ENCODE measurements at regions of chr6 and their contacts with region 1.

Region 1: DNA sequence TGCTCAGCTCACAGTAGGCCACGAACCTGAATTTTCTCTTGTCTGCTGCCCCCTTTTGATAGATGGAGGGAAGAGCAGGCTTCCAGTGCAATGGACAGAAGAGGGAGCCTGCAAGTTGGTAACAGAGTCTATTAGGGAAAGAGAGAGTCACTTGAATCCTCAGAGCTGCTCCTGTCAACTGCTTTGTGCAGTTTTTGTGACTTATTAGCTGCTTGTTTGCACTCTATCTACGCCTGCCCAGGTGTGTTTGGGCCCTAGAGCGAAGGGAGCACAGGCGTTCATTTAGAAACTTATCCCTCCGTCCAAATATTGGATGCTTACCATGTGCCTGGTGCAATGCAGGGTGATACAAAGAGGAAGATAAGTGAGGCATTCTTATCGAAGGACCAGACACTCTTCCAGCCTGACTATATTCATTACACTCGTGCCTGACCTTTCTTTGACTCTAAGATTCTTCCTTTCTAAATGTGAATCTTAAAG is 11.6 kb upstream of the SLC2A12 start:
- H3K4me3 ChIP-seq: no peak overlapping the region
- H3K27ac ChIP-seq: no peak overlapping the region
- H3K4me1 ChIP-seq: no peaks in the 10 kb centered on the region
- CTCF ChIP-seq: peak; percentile 91

Region 2: GRCh38 chr6:133916650-133917151 is 147.3 kb before region 1 on chr6:
- CTCF ChIA-PET with region 1: interaction called, 192 read pairs
- POLR2A ChIA-PET with region 1: no interaction called
- H3K4me3 ChIP-seq: no peak overlapping the region
- H3K27ac ChIP-seq: no peak overlapping the region
- H3K4me1 ChIP-seq: peaks cover 4% of the 10 kb centered on the region
- CTCF ChIP-seq: peak; percentile 88

Region 3: GRCh38 chr6:133966654-133967329 is 97.2 kb before region 1 on chr6:
- CTCF ChIA-PET with region 1: interaction called, 39 read pairs
- POLR2A ChIA-PET with region 1: no interaction called
- H3K4me3 ChIP-seq: no peak overlapping the region
- H3K27ac ChIP-seq: no peak overlapping the region
- H3K4me1 ChIP-seq: peaks cover 12% of the 10 kb centered on the region
- CTCF ChIP-seq: no peak

Region 4: GRCh38 chr6:133991096-133991593 is 72.9 kb before region 1 on chr6:
- CTCF ChIA-PET with region 1: interaction called, 24 read pairs
- POLR2A ChIA-PET with region 1: interaction called, 3 read pairs
- H3K4me3 ChIP-seq: no peak overlapping the region
- H3K27ac ChIP-seq: no peak overlapping the region
- H3K4me1 ChIP-seq: peaks cover 12% of the 10 kb centered on the region
- CTCF ChIP-seq: no peak

Region 5: GRCh38 chr6:134047673-134048072 is 16.3 kb before region 1 on chr6:
- CTCF ChIA-PET with region 1: interaction called, 39 read pairs
- POLR2A ChIA-PET with region 1: no interaction called
- H3K4me3 ChIP-seq: no peak overlapping the region
- H3K27ac ChIP-seq: no peak overlapping the region
- H3K4me1 ChIP-seq: 0 out of 2 replicates have a peak, but pooled peaks cover 3% of the 10 kb centered on the region
- CTCF ChIP-seq: no peak

Region 6: GRCh38 chr6:134111062-134111677 is 47.2 kb after region 1 on chr6:
- CTCF ChIA-PET with region 1: interaction called, 12 read pairs
- POLR2A ChIA-PET with region 1: no interaction called
- H3K4me3 ChIP-seq: no peak overlapping the region
- H3K27ac ChIP-seq: no peak overlapping the region
- H3K4me1 ChIP-seq: peaks cover 7% of the 10 kb centered on the region
- CTCF ChIP-seq: peak; percentile 77

Measured in HEK293 (cell line).